Activated T-helper 2 cell treated with anti-CD3 and anti-CD28 coated beads, Interferon-gamma antibody, Interleukin-2, Interleukin-4, amounts not matched to agents 10 μg/mL and 5 μg/mL and 100 μg/mL, durations not matched to agents 14 hours and 24 hours and 36 hours (primary cell): ENCODE measurements at regions of chr19 and their contacts with region 1.

Region 1: GRCh38 chr19:55599468-55600279 is at the start of gene FIZ1:
- DNase-seq: peak; percentile 94
- H3K4me3 Mint-ChIP-seq: peak within 1 kb of the TSS; percentile 96
- H3K27ac Mint-ChIP-seq: peak within 1 kb of the TSS; percentile 98
- H3K4me1 Mint-ChIP-seq: peaks cover 24% of the 10 kb centered on the region
- H3K27me3 Mint-ChIP-seq: no peaks in the 10 kb centered on the region
- total RNA-seq, gene FIZ1: 18.2 and 18.9 TPM in 2 replicates

Region 2: GRCh38 chr19:55279770-55280643 is 319.7 kb before region 1 on chr19 and contains the start of gene HSPBP1:
- intact Hi-C with region 1: loop called (anchors 2 kb)
- DNase-seq: peak; percentile 96
- H3K4me3 Mint-ChIP-seq: peak within 1 kb of the TSS; percentile 100
- H3K27ac Mint-ChIP-seq: peak within 1 kb of the TSS; percentile 97
- H3K4me1 Mint-ChIP-seq: peaks cover 16% of the 10 kb centered on the region
- H3K27me3 Mint-ChIP-seq: peaks cover 3% of the 10 kb centered on the region
- total RNA-seq, gene HSPBP1: 59.0 and 59.3 TPM in 2 replicates

Region 3: GRCh38 chr19:55385740-55386529 is 213.7 kb before region 1 on chr19 and contains the start of gene RPL28:
- intact Hi-C with region 1: loop called (anchors 10 kb)
- DNase-seq: peak; percentile 99
- H3K4me3 Mint-ChIP-seq: peak within 1 kb of the TSS; percentile 100
- H3K27ac Mint-ChIP-seq: peak within 1 kb of the TSS; percentile 94
- H3K4me1 Mint-ChIP-seq: peaks cover 44% of the 10 kb centered on the region
- H3K27me3 Mint-ChIP-seq: no peaks in the 10 kb centered on the region
- total RNA-seq, gene RPL28: 2,206 and 2,207 TPM in 2 replicates

Region 4: DNA sequence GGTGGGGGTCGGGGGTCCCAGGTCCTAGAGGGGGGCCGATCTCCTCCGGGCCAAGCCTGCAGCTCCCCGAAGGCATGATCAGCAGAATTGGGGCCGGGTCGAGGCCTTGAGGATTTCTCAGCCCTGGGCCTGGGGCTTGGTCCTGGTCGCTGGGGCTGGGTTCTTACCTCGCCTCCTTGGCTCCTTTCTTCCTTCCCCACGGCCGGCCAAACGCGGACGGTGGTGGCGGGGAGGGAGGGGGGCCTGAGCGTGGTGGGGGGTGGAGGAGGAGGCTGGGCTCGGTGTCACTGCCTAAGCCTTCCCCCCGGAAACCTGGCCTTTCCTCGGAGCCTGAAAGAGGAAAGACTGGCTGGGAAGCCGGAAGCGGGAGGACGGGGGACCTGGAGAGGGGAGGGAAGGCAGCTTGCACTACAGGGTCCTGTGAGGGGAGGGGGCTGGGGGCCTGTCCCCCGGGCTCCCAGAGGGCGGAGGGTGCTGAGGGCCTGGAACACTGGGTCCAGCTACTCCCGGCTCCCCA is 19.0 kb before region 1 on chr19 and contains the start of gene ZNF579:
- intact Hi-C with region 1: loop called (anchors 1 kb)
- DNase-seq: peak; percentile 68
- H3K4me3 Mint-ChIP-seq: peak within 1 kb of the TSS; percentile 88
- H3K27ac Mint-ChIP-seq: peak within 1 kb of the TSS; percentile 81
- H3K4me1 Mint-ChIP-seq: peaks cover 19% of the 10 kb centered on the region
- H3K27me3 Mint-ChIP-seq: peaks cover 7% of the 10 kb centered on the region
- total RNA-seq, gene ZNF579: 8.2 and 10.7 TPM in 2 replicates

Region 5: GRCh38 chr19:55624109-55625003 is 24.7 kb after region 1 on chr19 and contains the start of gene ZNF784:
- intact Hi-C with region 1: loop called (anchors 1 kb)
- DNase-seq: peak; percentile 89
- H3K4me3 Mint-ChIP-seq: peak within 1 kb of the TSS; percentile 89
- H3K27ac Mint-ChIP-seq: peak within 1 kb of the TSS; percentile 98
- H3K4me1 Mint-ChIP-seq: peaks cover 36% of the 10 kb centered on the region
- H3K27me3 Mint-ChIP-seq: peaks cover 6% of the 10 kb centered on the region
- total RNA-seq, gene ZNF784: 4.3 and 4.9 TPM in 2 replicates